ENCODE measurements at regions of chr1 and their contacts with region 1.

Region 1: GRCh38 chr1:92858564-92859399 is 26.9 kb downstream of the RPL5 start:
- DNase-seq: peak; percentile 74
- H3K4me3 Mint-ChIP-seq: peak overlapping the region; percentile 63
- H3K27ac Mint-ChIP-seq: peak overlapping the region; percentile 60
- H3K4me1 Mint-ChIP-seq: peaks cover 19% of the 10 kb centered on the region
- H3K27me3 Mint-ChIP-seq: no peaks in the 10 kb centered on the region

Region 2: GRCh38 chr1:92837062-92837461 is 21.7 kb before region 1 on chr1:
- CTCF ChIA-PET with region 1: interaction called, 19 read pairs
- intact Hi-C with region 1: loop called (anchors 1 kb)
- DNase-seq: no peak
- H3K4me3 Mint-ChIP-seq: peak overlapping the region; percentile 28
- H3K27ac Mint-ChIP-seq: peak overlapping the region; percentile 99
- H3K4me1 Mint-ChIP-seq: peaks cover 71% of the 10 kb centered on the region
- H3K27me3 Mint-ChIP-seq: no peaks in the 10 kb centered on the region

Region 3: DNA sequence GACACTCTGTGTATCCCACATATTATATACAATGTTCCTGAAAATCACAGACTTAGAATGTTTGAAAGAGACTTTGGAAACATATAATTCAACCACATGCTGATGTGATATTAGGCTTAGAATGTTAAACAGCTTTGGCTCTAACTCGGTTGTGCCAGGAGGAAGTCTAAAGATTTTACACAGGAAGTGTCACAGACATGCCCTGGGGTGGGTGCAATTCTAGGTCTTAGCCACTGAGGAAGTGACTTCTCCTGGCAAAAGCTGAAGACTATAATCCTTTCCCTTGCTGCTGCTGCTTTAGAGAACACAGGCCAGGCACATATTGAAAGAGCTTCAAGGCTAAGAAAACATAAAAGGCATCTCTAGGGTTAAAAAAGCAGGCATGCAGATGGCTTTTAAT is 24.0 kb after region 1 on chr1:
- CTCF ChIA-PET with region 1: interaction called, 28 read pairs
- intact Hi-C with region 1: no loop called
- DNase-seq: peak; percentile 56
- H3K4me3 Mint-ChIP-seq: no peak overlapping the region
- H3K27ac Mint-ChIP-seq: peak overlapping the region; percentile 64
- H3K4me1 Mint-ChIP-seq: peaks cover 36% of the 10 kb centered on the region
- H3K27me3 Mint-ChIP-seq: no peaks in the 10 kb centered on the region

Region 4: DNA sequence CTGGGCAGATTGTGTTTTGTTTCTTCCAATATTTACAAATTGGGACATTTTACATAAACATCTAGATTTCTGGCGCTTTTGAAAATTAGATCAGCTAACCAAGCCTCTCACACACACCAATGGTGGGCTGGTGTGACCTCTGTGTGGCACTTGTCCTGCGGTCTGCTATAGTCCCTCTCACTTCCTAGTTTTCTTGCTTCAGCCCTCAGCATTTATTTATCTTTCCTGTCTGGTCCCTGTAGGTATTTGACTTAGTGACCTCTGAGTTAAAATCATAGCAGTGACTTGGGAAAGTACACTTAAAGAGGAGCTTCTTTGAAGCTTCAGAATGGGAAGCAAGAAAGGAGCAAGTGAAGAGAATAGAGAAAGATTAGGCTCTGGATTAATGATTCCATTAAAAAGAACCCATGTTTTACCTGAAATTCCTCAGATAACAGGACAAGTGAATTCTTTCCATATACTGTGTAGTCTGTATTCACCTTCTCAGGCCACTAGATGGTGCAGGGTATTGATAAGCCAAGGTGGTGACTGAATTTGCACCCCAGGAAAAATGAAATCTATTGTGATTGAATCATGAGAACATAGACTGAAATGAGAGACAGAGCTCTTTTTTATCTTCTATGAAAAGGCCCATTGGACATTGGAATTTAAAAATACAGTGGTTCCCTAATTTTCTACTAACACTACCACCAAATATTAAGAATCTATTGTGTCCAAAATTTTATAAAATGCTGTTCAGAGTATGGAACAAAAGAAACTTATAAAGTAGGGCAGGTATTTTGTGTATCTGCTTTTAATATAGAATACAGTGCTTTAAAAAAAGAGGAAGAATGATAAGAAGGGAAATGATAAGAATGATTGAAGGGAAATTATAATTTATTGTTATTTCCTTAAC is 109.6 kb after region 1 on chr1:
- CTCF ChIA-PET with region 1: interaction called, 124 read pairs
- intact Hi-C with region 1: no loop called
- DNase-seq: peak; percentile 49
- H3K4me3 Mint-ChIP-seq: no peak overlapping the region
- H3K27ac Mint-ChIP-seq: no peak overlapping the region
- H3K4me1 Mint-ChIP-seq: peaks cover 30% of the 10 kb centered on the region
- H3K27me3 Mint-ChIP-seq: no peaks in the 10 kb centered on the region

Region 5: GRCh38 chr1:92994105-92994712 is 135.4 kb after region 1 on chr1:
- CTCF ChIA-PET with region 1: interaction called, 136 read pairs
- intact Hi-C with region 1: loop called (anchors 1 kb)
- DNase-seq: peak; percentile 82
- H3K4me3 Mint-ChIP-seq: no peak overlapping the region
- H3K27ac Mint-ChIP-seq: no peak overlapping the region
- H3K4me1 Mint-ChIP-seq: peaks cover 41% of the 10 kb centered on the region
- H3K27me3 Mint-ChIP-seq: no peaks in the 10 kb centered on the region

Region 6: DNA sequence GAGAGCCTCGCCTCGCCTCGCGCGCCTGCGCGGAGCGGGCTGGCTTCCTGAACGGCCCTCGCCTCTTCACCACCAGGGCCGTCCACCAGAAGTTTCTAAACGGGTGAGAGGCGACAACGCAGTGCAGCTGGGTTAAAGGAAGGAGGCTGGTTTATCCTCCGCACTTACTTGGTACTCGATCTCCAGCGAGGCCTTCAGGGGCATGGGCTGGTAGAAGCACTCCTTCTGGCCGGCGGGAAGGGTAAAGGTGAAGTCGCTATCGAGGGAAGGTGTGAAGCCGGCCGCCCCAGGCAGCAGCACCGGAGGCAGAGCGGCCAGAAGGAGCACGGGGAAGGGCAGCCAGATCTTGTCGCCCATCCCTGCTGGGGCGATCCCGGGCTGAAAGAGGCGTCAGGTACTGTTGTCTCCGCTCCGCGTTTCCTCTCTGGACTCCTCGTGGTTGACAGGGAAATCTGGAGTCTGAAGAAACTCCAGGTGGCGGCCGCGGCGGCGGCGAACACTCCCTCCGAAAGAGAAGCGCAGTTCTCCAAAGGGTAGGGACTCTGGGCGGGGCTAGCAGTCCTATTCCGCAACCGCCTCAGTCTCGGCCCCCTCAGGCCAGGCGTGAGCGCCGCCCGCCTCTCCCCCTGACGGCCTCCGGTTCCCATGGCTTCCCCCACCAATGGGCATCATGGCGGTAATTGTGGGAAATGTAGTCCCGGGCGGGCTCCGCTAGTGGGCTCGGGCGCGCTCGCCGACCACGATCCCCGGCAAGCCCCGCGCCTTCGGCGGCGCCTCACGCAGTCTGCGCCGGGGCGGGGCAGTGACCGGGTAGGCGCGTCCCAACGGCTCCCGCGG is 321.3 kb after region 1 on chr1 and contains the start of gene TMED5:
- CTCF ChIA-PET with region 1: no interaction called
- intact Hi-C with region 1: loop called (anchors 5 kb)
- DNase-seq: peak; percentile 98
- H3K4me3 Mint-ChIP-seq: peak within 1 kb of the TSS; percentile 88
- H3K27ac Mint-ChIP-seq: peak within 1 kb of the TSS; percentile 99
- H3K4me1 Mint-ChIP-seq: peaks cover 49% of the 10 kb centered on the region
- H3K27me3 Mint-ChIP-seq: no peaks in the 10 kb centered on the region
- total RNA-seq, gene TMED5: 27.8 to 28.2 TPM